ENCODE measurements at regions of chr19 and their contacts with region 1.

Region 1: DNA sequence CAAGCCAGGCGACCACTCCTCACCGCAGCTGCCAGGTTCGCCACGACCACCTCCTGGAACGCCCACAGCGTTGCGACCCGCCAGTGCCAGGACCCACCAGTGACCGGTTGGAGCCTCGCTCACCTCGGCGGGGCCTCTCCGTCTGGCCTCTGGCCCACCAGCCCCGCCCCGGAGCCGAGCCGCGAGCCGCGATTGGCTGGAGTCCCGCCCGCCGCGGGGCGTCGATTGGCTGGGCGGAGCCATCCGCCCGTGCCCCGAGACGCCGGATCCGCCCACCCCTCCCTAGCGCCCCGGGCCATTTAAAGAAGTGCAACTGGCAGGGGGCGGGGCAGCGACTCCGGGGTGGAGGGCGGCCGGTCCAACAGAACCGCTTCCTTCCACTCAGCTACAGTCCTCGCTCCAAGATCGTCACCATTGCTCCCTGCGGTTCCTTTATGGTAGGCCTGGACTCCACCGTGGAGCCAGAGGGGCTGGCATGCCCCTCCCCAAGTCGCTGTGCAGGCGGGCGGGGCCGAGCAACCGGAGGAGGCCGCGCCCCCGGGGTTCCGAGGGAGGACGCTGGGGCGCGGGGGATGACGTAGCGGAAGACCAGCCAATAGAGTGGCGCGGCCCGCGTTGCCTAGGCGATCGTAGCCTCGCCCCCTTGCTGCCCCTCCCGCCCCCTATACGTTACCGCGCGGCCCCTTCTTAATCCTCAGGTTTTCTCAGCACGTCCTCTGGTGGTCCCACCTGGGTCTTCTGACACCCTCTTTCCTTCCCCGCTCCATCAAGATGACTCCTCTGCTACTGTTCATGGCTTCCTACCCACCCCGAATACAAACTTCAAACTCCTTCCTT is at the start of gene SERTAD3:
- DNase-seq: peak; percentile 75 to 98
- H3K4me3 ChIP-seq: peak within 1 kb of the TSS; percentile 75
- H3K27ac ChIP-seq: peak within 1 kb of the TSS; percentile 70
- H3K4me1 ChIP-seq: peaks cover 12% of the 10 kb centered on the region
- H3K27me3 ChIP-seq: no peaks in the 10 kb centered on the region
- CTCF ChIP-seq: no peak
- total RNA-seq, gene SERTAD3: 35.9 and 41.4 TPM in 2 replicates

Region 2: DNA sequence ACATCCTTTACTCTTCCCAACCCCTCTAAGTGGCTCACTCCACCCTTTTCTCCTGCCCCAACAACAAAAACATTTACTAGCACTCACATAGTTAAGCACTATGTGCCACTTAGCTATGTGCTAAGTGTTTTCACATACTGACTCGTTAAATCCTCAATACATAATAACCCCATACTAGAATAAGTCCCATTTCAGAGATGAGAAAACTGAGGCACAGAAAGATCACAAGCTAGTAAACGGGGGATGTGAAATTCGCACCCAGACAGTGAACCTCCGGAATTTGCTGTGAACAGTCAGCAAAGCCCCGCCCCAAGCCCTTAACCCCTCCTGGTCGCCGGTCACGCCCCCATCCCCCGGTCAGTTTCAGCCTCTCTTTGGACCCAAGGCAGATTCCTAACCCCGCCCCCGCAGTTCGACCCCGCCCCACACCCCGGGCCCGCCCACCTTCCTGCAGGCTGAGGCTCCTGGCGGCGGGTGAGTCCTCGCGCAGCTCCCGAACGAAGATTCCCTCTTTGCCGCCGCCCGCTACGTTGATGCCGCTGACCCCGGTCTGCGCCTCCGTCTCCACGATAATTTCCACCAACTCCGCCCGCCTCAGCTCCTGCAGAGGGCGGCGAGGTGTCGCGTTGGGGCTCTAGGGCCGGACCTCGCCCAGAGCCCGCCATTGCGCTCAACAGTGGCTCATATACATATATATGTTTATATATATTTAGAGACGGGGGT is 41.0 kb before region 1 on chr19:
- CTCF ChIA-PET with region 1: no interaction called
- POLR2A ChIA-PET with region 1: interaction called, 4 read pairs
- intact Hi-C with region 1: loop called (anchors 5 kb)
- DNase-seq: peak; percentile 69 to 96
- H3K4me3 ChIP-seq: peak overlapping the region; percentile 90
- H3K27ac ChIP-seq: 0 out of 2 replicates have a peak overlapping the region, but pooled peaks have one; percentile 23
- H3K4me1 ChIP-seq: peaks cover 4% of the 10 kb centered on the region
- H3K27me3 ChIP-seq: no peaks in the 10 kb centered on the region
- CTCF ChIP-seq: no peak

Region 3: DNA sequence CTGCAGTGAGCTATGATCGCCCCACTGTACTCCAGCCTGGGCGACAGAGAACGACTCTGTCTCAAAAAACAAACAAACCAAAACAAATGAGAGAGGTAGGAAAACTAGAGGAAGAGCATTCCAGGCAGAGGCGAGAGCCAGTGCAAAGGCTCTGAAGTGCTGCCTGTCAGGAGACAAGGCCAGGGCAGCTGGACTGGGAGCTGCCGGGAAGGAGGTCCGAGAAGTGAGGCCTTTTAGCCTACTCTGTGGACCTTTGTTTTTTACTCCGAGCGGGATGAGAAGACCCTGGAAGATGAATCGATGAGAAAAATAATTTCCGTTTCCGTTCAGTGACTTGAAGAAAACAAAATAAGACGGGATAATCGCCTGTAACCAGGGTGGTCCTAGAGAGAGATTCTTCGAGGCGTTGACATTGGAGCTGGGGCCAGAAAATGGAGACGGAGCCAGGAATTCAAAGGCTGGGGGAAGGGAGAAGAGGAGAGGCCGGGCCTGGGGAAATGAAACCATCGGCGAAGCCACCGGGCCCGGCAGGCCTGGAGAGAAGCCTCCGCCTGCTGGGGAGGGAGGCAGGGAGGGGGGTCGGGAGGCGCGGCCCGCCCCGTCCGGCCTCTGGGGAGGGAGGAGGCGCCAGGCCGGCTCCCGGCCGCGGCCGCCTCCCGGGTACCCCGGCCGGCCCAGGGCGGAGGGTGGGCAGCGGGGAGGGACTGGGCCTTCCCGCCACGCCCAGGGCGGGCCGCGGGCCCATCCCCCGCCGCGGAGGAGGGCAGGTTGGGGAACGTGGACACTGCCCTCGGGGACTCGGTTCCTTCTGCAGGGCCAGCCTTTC is 10.8 kb before region 1 on chr19:
- CTCF ChIA-PET with region 1: interaction called, 4 read pairs
- POLR2A ChIA-PET with region 1: interaction called, 3 read pairs
- intact Hi-C with region 1: loop called (anchors 1 kb)
- DNase-seq: peak; percentile 75 to 96
- H3K4me3 ChIP-seq: peak overlapping the region; percentile 63
- H3K27ac ChIP-seq: peak overlapping the region; percentile 89
- H3K4me1 ChIP-seq: peaks cover 29% of the 10 kb centered on the region
- H3K27me3 ChIP-seq: no peaks in the 10 kb centered on the region
- CTCF ChIP-seq: no peak

Region 4: DNA sequence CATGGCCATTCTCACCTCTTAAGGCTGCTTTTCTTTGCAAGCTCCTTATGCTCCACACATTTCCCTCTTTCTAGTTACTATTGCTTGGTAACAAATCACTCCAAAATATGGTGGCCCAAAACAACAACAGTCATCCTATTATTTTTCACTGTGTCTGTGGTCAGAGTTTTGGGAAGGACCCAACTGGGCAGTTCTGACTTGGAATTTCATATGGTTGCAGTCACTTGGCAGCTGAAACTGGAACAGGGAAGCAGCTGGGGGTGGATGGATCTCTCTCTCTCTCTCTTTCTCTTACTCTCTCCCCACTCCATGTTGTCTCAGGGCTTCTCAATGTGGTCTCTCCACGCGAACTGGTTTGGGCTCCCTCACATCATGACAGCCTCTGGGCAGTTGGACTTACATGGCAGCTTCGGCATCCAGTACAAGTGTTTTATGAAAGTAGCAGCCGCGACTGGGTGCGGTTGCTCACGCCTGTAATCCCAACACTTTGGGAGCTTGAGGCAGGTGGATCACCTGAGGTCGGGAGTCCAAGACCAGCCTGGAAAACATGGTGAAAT is 206.4 kb after region 1 on chr19:
- CTCF ChIA-PET with region 1: no interaction called
- POLR2A ChIA-PET with region 1: interaction called, 12 read pairs
- intact Hi-C with region 1: no loop called
- DNase-seq: no peak
- H3K4me3 ChIP-seq: no peak overlapping the region
- H3K27ac ChIP-seq: no peak overlapping the region
- H3K4me1 ChIP-seq: peaks cover 10% of the 10 kb centered on the region
- H3K27me3 ChIP-seq: no peaks in the 10 kb centered on the region
- CTCF ChIP-seq: no peak